Cardiac septum (tissue), 1 donor: ENCODE measurements at regions of chr1 and their contacts with region 1.

Region 1: GRCh38 chr1:8314346-8315280 is 3.3 kb upstream of the SLC45A1 start:
- DNase-seq: no peak

Region 2: DNA sequence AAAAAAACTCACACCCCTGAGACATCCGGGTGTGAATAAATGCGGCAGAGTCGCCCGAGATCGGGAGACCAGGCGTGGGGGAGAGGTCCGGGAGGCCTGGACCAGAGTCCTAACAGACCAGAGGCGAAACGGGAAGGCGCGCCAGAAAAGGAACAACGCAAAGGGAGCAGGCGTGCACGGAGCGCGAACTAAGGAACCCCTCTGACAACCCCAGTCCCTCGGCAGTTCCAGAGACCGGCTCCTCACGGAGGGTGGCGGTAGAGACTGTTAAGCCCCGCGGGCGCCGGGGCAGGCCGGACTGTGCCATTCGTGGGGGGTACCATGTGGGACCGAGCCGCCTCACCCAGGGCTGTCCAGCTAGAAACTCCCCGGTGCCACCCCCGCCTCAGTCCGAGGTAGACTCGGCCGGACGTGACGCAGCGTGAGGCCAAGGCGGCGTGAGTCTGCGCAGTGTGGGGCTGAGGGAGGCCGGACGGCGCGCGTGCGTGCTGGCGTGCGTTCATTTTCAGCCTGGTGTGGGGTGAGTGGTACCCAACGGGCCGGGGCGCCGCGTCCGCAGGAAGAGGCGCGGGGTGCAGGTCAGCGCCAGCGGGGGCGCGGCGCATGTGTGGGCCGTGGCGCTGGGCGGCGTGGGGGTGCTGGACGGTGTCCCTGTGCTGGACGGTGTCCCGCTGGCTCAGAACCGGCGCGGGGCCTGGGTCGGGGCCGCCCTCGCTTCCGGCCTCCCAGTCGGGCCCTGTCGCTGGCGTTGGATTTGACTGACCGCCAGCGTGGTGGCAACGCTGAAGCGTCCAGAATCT is 353.2 kb before region 1 on chr1 and contains the start of gene PARK7:
- intact Hi-C with region 1: no loop called
- DNase-seq: peak; percentile 100
- total RNA-seq, gene PARK7: 316 TPM

Region 3: GRCh38 chr1:7983086-7983778 is 331.4 kb before region 1 on chr1:
- intact Hi-C with region 1: loop called (anchors 2 kb)
- DNase-seq: no peak

Region 4: DNA sequence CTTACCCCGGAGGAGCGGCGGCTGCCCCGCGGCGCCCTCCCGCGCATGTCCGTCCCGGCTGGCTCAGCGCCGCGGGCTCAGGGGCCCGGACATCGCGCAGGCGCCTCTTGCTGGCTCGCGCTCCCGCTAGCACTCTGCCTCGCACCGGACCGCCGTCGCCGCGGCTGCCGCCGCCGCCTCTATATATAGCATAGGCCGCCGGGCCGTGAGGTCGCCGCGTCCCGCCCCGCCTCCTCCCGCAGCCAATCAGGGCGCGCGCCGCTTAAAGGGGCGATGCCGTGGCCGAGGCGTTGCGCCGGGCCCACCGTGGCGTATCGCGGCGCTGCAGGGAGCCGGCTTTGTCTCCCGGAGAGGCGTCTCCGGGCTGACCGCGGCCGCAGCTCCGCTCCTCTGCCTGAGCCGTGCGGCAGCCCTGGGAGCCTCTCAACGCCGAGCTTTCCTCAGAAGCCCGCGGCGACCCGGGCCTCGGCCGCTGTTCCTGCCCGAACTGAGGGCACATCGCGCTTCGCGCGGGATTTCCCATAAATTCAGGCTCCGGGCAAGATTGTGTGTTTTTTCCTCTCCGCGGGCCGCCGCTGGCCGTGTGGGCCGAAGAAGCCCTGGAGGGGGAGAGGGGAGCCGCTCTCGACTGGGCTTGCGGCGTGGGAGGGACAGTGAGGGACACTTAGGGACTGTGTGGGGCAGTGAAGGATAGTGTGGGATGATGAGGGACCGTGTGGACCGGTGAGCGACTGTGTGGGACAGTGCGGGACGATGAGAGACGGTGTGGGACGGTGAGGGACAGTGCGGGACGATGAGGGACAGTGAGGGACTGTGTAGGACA is 288.2 kb before region 1 on chr1 and contains the start of gene ERRFI1:
- intact Hi-C with region 1: loop called (anchors 1 kb)
- DNase-seq: peak; percentile 95
- total RNA-seq, gene ERRFI1: 8.2 TPM

Region 5: GRCh38 chr1:8035289-8035688 is 279.3 kb before region 1 on chr1:
- intact Hi-C with region 1: loop called (anchors 2 kb)
- DNase-seq: no peak